ENCODE measurements at regions of chr14 and their contacts with region 1.

Region 1: GRCh38 chr14:38290601-38291190 is 34.8 kb upstream of the CLEC14A start:
- DNase-seq: no peak
- ATAC-seq: peak; percentile 44
- H3K4me3 ChIP-seq: no peak overlapping the region
- H3K27ac ChIP-seq: no peak overlapping the region
- H3K4me1 ChIP-seq: peaks cover 0 to 3% of the 10 kb centered on the region in 2 donors
- H3K27me3 ChIP-seq: no peaks in the 10 kb centered on the region

Region 2: DNA sequence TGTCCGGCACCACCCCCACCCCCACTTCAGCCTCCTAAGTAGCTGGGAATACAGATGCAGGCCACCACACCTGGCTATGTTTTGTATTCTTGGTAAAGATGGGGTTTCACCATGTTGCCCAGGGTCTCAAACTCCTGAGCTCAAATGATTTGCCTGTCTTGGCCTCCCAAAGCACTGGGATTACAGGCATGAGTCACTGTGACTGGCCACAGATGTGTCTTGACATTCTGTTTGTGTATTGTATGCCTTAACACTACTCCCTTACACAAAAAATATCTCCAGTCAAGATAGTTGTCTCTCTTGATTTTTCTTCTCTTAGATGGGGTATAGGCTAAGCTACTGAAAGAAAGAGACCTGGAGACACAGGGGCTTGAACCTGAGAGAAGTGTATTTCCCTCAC is 52.4 kb before region 1 on chr14:
- intact Hi-C with region 1: no loop called
- DNase-seq: no peak
- ATAC-seq: no peak
- H3K4me3 ChIP-seq: no peak overlapping the region
- H3K27ac ChIP-seq: no peak overlapping the region
- H3K4me1 ChIP-seq: no peaks in the 10 kb centered on the region
- H3K27me3 ChIP-seq: no peaks in the 10 kb centered on the region

Region 3: GRCh38 chr14:38412654-38413053 is 122.0 kb after region 1 on chr14:
- intact Hi-C with region 1: loop called in 1 of 2 experiments (anchors 5 kb)
- DNase-seq: no peak
- ATAC-seq: no peak
- H3K4me3 ChIP-seq: no peak overlapping the region
- H3K27ac ChIP-seq: no peak overlapping the region
- H3K4me1 ChIP-seq: peaks cover 2 to 6% of the 10 kb centered on the region in 2 donors
- H3K27me3 ChIP-seq: no peaks in the 10 kb centered on the region

Measured in aorta (tissue), 5 donors.